ENCODE measurements at regions of chr22 and their contacts with region 1.

Region 1: DNA sequence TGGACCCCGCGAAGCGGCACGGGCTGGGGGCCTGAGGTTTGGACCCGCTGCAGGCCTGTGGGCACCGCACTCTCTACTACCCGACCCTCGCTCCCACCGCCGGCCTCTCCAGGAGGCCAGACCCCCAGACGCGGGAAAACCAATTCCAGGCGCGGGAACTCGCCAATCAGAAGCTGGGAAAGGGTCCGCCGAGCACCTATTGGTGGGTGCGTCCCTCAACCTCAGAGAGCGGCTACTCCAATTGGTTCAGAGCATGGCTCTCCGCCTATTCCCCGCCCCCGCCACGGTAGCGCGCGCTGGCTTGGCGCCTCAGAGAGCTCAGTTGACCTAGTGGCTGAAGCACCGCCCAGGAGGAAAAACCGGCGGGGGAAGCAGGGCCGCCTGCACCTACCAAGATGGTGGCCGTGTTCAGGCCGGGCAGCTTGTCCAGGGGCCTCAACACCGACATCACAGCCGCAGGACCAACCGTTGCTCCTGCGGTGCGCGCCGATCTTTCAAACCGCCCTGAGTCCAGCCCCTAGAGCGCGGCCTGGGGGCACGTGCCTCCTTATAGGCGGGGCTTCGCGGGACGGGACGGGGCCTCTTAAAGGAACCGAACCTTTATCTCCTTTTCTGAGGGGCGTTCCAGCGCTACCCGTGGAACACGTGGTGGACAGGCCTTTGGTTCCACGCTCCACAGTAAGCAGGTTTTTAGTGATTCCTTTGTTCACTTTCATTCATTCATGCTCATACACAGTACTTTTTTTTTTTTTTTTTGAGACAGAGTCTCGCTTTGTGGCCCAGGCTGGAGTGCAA is at the start of gene CENPM:
- DNase-seq: peak; percentile 96 to 97
- H3K4me3 ChIP-seq: peak within 1 kb of the TSS; percentile 47
- H3K4me3 Mint-ChIP-seq: peak within 1 kb of the TSS; percentile 93
- H3K27ac Mint-ChIP-seq: peak within 1 kb of the TSS; percentile 81
- H3K4me1 ChIP-seq: peaks cover 11% of the 10 kb centered on the region
- H3K4me1 Mint-ChIP-seq: peaks cover 13% of the 10 kb centered on the region
- H3K27me3 ChIP-seq: no peaks in the 10 kb centered on the region
- H3K27me3 Mint-ChIP-seq: no peaks in the 10 kb centered on the region
- CTCF ChIP-seq: peak in 1 of 2 experiments; percentile 6
- total RNA-seq, gene CENPM: 44.1 and 46.4 TPM in 2 replicates

Region 2: GRCh38 chr22:41746567-41747400 is 200.0 kb before region 1 on chr22:
- CTCF ChIA-PET with region 1: interaction called, 11 read pairs
- POLR2A ChIA-PET with region 1: no interaction called
- intact Hi-C with region 1: no loop called
- DNase-seq: peak; percentile 80 to 84
- H3K4me3 ChIP-seq: no peak overlapping the region
- H3K4me3 Mint-ChIP-seq: no peak overlapping the region
- H3K27ac Mint-ChIP-seq: no peak overlapping the region
- H3K4me1 ChIP-seq: no peaks in the 10 kb centered on the region
- H3K4me1 Mint-ChIP-seq: no peaks in the 10 kb centered on the region
- H3K27me3 ChIP-seq: no peaks in the 10 kb centered on the region
- H3K27me3 Mint-ChIP-seq: peaks cover 3% of the 10 kb centered on the region
- CTCF ChIP-seq: peak; percentile 62 to 91

Region 3: GRCh38 chr22:41832553-41833368 is 114.1 kb before region 1 on chr22 and contains the start of gene SREBF2:
- CTCF ChIA-PET with region 1: interaction called, 3 read pairs
- POLR2A ChIA-PET with region 1: interaction called, 10 read pairs
- intact Hi-C with region 1: no loop called
- DNase-seq: peak; percentile 99 to 100
- H3K4me3 ChIP-seq: peak within 1 kb of the TSS; percentile 94
- H3K4me3 Mint-ChIP-seq: peak within 1 kb of the TSS; percentile 98
- H3K27ac Mint-ChIP-seq: peak within 1 kb of the TSS; percentile 95
- H3K4me1 ChIP-seq: peaks cover 11% of the 10 kb centered on the region
- H3K4me1 Mint-ChIP-seq: peaks cover 14% of the 10 kb centered on the region
- H3K27me3 ChIP-seq: no peaks in the 10 kb centered on the region
- H3K27me3 Mint-ChIP-seq: no peaks in the 10 kb centered on the region
- CTCF ChIP-seq: no peak
- total RNA-seq, gene SREBF2: 134 and 150 TPM in 2 replicates

Region 4: GRCh38 chr22:41998361-41999275 is 51.8 kb after region 1 on chr22 and contains the start of gene WBP2NL:
- CTCF ChIA-PET with region 1: interaction called, 3 read pairs
- POLR2A ChIA-PET with region 1: interaction called, 5 read pairs
- intact Hi-C with region 1: loop called (anchors 2 kb)
- DNase-seq: peak; percentile 88
- H3K4me3 ChIP-seq: peak within 1 kb of the TSS; percentile 55
- H3K4me3 Mint-ChIP-seq: peak within 1 kb of the TSS; percentile 87
- H3K27ac Mint-ChIP-seq: peak within 1 kb of the TSS; percentile 96
- H3K4me1 ChIP-seq: peaks cover 5% of the 10 kb centered on the region
- H3K4me1 Mint-ChIP-seq: no peaks in the 10 kb centered on the region
- H3K27me3 ChIP-seq: no peaks in the 10 kb centered on the region
- H3K27me3 Mint-ChIP-seq: peaks cover 4% of the 10 kb centered on the region
- CTCF ChIP-seq: no peak
- total RNA-seq, gene WBP2NL: 1.00 and 1.0 TPM in 2 replicates

Region 5: GRCh38 chr22:42070517-42071422 is 123.9 kb after region 1 on chr22 and contains the start of gene NAGA:
- CTCF ChIA-PET with region 1: interaction called, 4 read pairs
- POLR2A ChIA-PET with region 1: interaction called, 10 read pairs
- intact Hi-C with region 1: loop called (anchors 5 kb)
- DNase-seq: peak; percentile 94 to 96
- H3K4me3 ChIP-seq: peak within 1 kb of the TSS; percentile 70
- H3K4me3 Mint-ChIP-seq: peak within 1 kb of the TSS; percentile 92
- H3K27ac Mint-ChIP-seq: peak within 1 kb of the TSS; percentile 89
- H3K4me1 ChIP-seq: peaks cover 26% of the 10 kb centered on the region
- H3K4me1 Mint-ChIP-seq: peaks cover 5% of the 10 kb centered on the region
- H3K27me3 ChIP-seq: no peaks in the 10 kb centered on the region
- H3K27me3 Mint-ChIP-seq: no peaks in the 10 kb centered on the region
- CTCF ChIP-seq: no peak
- total RNA-seq, gene NAGA: 27.8 and 28.3 TPM in 2 replicates

Measured in Caco-2 (cell line).